Spleen (tissue), 13 donors: ENCODE measurements at regions of chr20 and their contacts with region 1.

Region 1: GRCh38 chr20:48904365-48905296 is 16.9 kb upstream of the ARFGEF2 start:
- DNase-seq: no peak
- H3K4me3 ChIP-seq: peak overlapping the region in 1 of 8 donors; percentile 18
- H3K27ac ChIP-seq: no peak overlapping the region
- H3K4me1 ChIP-seq: peaks cover 6 to 41% (median 11%) of the 10 kb centered on the region in 6 donors
- H3K27me3 ChIP-seq: no peaks in the 10 kb centered on the region
- CTCF ChIP-seq: peak; percentile 74 to 97 (median 87)
- POLR2A ChIP-seq: no peak

Region 2: GRCh38 chr20:48657475-48658470 is 246.9 kb before region 1 on chr20:
- intact Hi-C with region 1: loop called (anchors 2 kb)
- DNase-seq: peak; percentile 88
- H3K4me3 ChIP-seq: no peak overlapping the region
- H3K27ac ChIP-seq: peak overlapping the region in 3 of 8 donors; percentile 7 to 35 (median 18)
- H3K4me1 ChIP-seq: peaks cover 0 to 34% (median 11%) of the 10 kb centered on the region in 6 donors
- H3K27me3 ChIP-seq: no peaks in the 10 kb centered on the region
- CTCF ChIP-seq: peak; percentile 82 to 95 (median 91)
- POLR2A ChIP-seq: no peak

Region 3: GRCh38 chr20:49742948-49743347 is 838.3 kb after region 1 on chr20:
- intact Hi-C with region 1: no loop called
- DNase-seq: no peak
- H3K4me3 ChIP-seq: no peak overlapping the region
- H3K27ac ChIP-seq: no peak overlapping the region
- H3K4me1 ChIP-seq: peaks cover 0 to 7% (median 3%) of the 10 kb centered on the region in 6 donors
- H3K27me3 ChIP-seq: no peaks in the 10 kb centered on the region
- CTCF ChIP-seq: no peak
- POLR2A ChIP-seq: no peak